ENCODE measurements at regions of chr10 and their contacts with region 1.

Region 1: GRCh38 chr10:97498076-97498840 is at the start of gene MMS19:
- DNase-seq: peak; percentile 100
- H3K4me3 ChIP-seq: peak within 1 kb of the TSS; percentile 80 to 97
- H3K27ac ChIP-seq: peak within 1 kb of the TSS; percentile 89 to 93
- H3K4me1 ChIP-seq: peaks cover 5% of the 10 kb centered on the region
- H3K27me3 ChIP-seq: no peaks in the 10 kb centered on the region
- CTCF ChIP-seq: peak in 3 of 4 experiments; percentile 20 to 47 (median 31)
- POLR2A ChIP-seq: peak; percentile 88
- total RNA-seq, gene MMS19: 41.5 to 207 TPM

Region 2: GRCh38 chr10:97543025-97543575 is 44.8 kb after region 1 on chr10:
- intact Hi-C with region 1: loop called (anchors 5 kb)
- DNase-seq: peak; percentile 51
- H3K4me3 ChIP-seq: no peak overlapping the region
- H3K27ac ChIP-seq: peak overlapping the region; percentile 78 to 82
- H3K4me1 ChIP-seq: peaks cover 8% of the 10 kb centered on the region
- H3K27me3 ChIP-seq: no peaks in the 10 kb centered on the region
- CTCF ChIP-seq: no peak
- POLR2A ChIP-seq: no peak